ENCODE measurements at regions of chr19 and their contacts with region 1.

Region 1: GRCh38 chr19:33795370-33796163 is 1.1 kb upstream of the KCTD15 start:
- DNase-seq: peak; percentile 85 to 95
- H3K4me3 ChIP-seq: peak overlapping the region; percentile 75 to 88 (median 86)
- H3K27ac ChIP-seq: peak overlapping the region; percentile 89 to 98 (median 96)
- H3K4me1 ChIP-seq: peaks cover 8 to 52% (median 36%) of the 10 kb centered on the region in 4 donors
- H3K27me3 ChIP-seq: peaks cover 0 to 20% (median 0%) of the 10 kb centered on the region in 3 donors
- CTCF ChIP-seq: peak in 5 of 7 experiments; percentile 58 to 96 (median 77)
- EP300 ChIP-seq: no peak
- POLR2A ChIP-seq: no peak

Region 2: GRCh38 chr19:33905937-33906576 is 110.5 kb after region 1 on chr19:
- intact Hi-C with region 1: loop called (anchors 10 kb)
- DNase-seq: peak; percentile 86 to 92
- H3K4me3 ChIP-seq: peak overlapping the region; percentile 44 to 62 (median 52)
- H3K27ac ChIP-seq: peak overlapping the region; percentile 80 to 88 (median 84)
- H3K4me1 ChIP-seq: peaks cover 18 to 30% (median 23%) of the 10 kb centered on the region in 4 donors
- H3K27me3 ChIP-seq: peaks cover 0 to 32% (median 6%) of the 10 kb centered on the region in 3 donors
- CTCF ChIP-seq: no peak
- EP300 ChIP-seq: no peak
- POLR2A ChIP-seq: peak in 1 of 4 donors; percentile 15

Region 3: GRCh38 chr19:34096020-34096915 is 300.7 kb after region 1 on chr19:
- intact Hi-C with region 1: loop called (anchors 5 kb)
- DNase-seq: peak in 1 of 2 donors; percentile 75
- H3K4me3 ChIP-seq: no peak overlapping the region
- H3K27ac ChIP-seq: no peak overlapping the region
- H3K4me1 ChIP-seq: peaks cover 0 to 9% (median 4%) of the 10 kb centered on the region in 4 donors
- H3K27me3 ChIP-seq: no peaks in the 10 kb centered on the region
- CTCF ChIP-seq: peak in 5 of 7 experiments; percentile 20 to 71 (median 46)
- EP300 ChIP-seq: no peak
- POLR2A ChIP-seq: no peak

Measured in stomach (tissue), 19 donors.